ENCODE measurements at regions of chr10 and their contacts with region 1.

Region 1: GRCh38 chr10:18312374-18313139 is 172.3 kb downstream of the CACNB2 start:
- DNase-seq: no peak
- ATAC-seq: peak; percentile 91
- H3K4me3 ChIP-seq: no peak overlapping the region
- H3K27ac ChIP-seq: no peak overlapping the region
- H3K4me1 ChIP-seq: no peaks in the 10 kb centered on the region
- H3K27me3 ChIP-seq: no peaks in the 10 kb centered on the region
- CTCF ChIP-seq: peak; percentile 50 to 77 (median 52); a peak in 5 of 6 replicates
- EP300 ChIP-seq: no peak
- POLR2A ChIP-seq: no peak
- RAD21 ChIP-seq: peak; percentile 68

Region 2: DNA sequence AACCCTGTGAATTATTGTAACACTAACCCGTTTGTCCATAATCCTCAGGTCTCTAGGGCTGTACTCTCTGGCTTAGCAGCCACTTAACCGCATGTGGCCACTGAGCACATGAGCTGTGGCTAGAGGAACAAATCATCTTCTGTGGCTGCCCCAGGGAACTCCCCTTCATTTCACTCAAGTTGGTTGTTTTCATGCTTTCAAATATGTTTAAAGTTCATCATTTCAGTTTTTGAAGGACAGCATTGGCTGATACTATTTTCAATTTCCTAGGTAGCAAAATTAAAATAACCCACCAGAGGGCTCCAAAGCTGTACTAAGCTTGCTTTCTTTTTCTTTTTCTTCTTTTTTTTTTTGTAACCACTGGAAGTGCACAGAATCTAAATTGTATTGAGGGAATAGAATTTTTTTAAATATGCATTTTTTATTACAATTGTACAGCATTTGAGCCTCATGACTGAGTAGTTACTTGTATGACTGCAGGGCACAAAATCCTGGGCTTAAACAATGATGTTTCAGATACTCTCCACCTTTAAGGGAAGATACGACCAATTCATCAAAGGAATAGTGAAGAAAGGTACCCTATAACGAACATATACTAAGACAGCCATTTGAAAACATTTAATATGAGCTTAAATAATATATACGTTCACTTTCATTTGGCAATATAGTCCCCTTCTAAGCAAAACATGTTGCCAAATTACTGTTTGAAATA is 464.8 kb before region 1 on chr10:
- CTCF ChIA-PET with region 1: interaction called, 4 read pairs
- POLR2A ChIA-PET with region 1: no interaction called
- RAD21 ChIA-PET with region 1: interaction called, 7 read pairs
- SMC1A ChIA-PET with region 1: no interaction called
- in situ Hi-C with region 1: no loop called
- intact Hi-C with region 1: loop called (anchors 10 kb)
- DNase-seq: no peak
- ATAC-seq: peak; percentile 88
- H3K4me3 ChIP-seq: no peak overlapping the region
- H3K27ac ChIP-seq: no peak overlapping the region
- H3K4me1 ChIP-seq: no peaks in the 10 kb centered on the region
- H3K27me3 ChIP-seq: no peaks in the 10 kb centered on the region; a peak in 1 of 4 replicates
- CTCF ChIP-seq: peak; percentile 14 to 53 (median 38); a peak in 4 of 6 replicates
- EP300 ChIP-seq: no peak
- POLR2A ChIP-seq: no peak
- RAD21 ChIP-seq: peak; percentile 70

Region 3: DNA sequence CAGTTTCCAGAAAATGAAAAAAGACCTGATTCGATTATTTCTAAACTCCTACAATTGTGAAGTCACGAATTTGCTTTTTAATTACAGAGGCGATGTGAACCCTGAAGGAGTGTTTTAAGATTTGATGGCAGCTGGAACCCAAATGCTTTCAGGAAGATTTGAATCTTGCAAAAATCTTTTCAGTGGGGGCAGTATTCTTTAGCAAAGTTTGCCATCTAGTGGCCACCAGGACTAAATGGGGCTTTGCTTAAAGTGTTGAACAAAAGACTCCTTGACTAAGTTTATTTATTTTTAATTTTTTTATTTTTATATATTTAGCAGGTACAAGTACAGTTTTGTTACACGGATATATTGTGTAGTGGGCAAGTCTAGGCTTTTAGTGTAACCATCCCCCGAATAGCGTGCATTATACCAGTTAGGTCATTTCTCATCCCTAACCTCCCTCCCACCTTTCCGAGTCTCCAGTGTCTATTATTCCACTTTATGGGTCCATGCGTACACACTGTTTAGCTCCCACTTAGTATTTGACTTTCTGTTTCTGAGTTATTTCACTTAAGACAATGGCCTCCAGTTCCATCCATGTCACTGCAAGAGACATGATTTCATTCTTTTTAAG is 73.6 kb before region 1 on chr10:
- CTCF ChIA-PET with region 1: interaction called, 23 read pairs
- POLR2A ChIA-PET with region 1: interaction called, 3 read pairs
- RAD21 ChIA-PET with region 1: interaction called, 6 read pairs
- SMC1A ChIA-PET with region 1: interaction called, 19 read pairs
- in situ Hi-C with region 1: no loop called
- intact Hi-C with region 1: loop called (anchors 5 kb)
- DNase-seq: no peak
- ATAC-seq: peak; percentile 66
- H3K4me3 ChIP-seq: no peak overlapping the region
- H3K27ac ChIP-seq: no peak overlapping the region
- H3K4me1 ChIP-seq: no peaks in the 10 kb centered on the region
- H3K27me3 ChIP-seq: peaks cover 0 to 3% of the 10 kb centered on the region in 2 experiments; a peak in 2 of 4 replicates
- CTCF ChIP-seq: peak; percentile 51 to 68 (median 58); a peak in 5 of 6 replicates
- EP300 ChIP-seq: no peak
- POLR2A ChIP-seq: no peak
- RAD21 ChIP-seq: peak; percentile 77

Region 4: DNA sequence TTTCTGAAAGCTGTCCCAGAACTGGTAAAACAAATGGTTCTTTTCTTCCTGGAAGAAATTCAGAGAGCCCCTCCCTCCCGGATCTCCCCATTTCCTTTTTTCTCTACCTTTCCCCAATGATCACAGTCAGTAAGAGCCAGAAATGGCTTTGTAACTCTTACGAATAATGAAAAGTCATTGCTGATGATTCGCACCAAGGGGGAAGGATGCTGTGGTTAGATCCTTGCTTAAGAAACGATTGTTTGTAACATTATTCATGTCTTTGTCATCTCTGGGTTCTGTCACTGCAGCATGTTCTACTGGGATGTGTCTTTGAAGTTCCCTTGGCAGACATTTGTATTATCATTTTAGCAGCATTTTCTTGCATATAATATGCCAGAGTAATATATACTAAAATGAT is 33.4 kb before region 1 on chr10:
- CTCF ChIA-PET with region 1: interaction called, 15 read pairs
- POLR2A ChIA-PET with region 1: interaction called, 3 read pairs
- RAD21 ChIA-PET with region 1: no interaction called
- SMC1A ChIA-PET with region 1: interaction called, 3 read pairs
- in situ Hi-C with region 1: no loop called
- intact Hi-C with region 1: no loop called
- DNase-seq: no peak
- ATAC-seq: no peak
- H3K4me3 ChIP-seq: no peak overlapping the region
- H3K27ac ChIP-seq: no peak overlapping the region
- H3K4me1 ChIP-seq: no peaks in the 10 kb centered on the region
- H3K27me3 ChIP-seq: no peaks in the 10 kb centered on the region
- CTCF ChIP-seq: no peak
- EP300 ChIP-seq: no peak
- POLR2A ChIP-seq: no peak
- RAD21 ChIP-seq: no peak

Region 5: GRCh38 chr10:18325889-18326531 is 13.5 kb after region 1 on chr10:
- CTCF ChIA-PET with region 1: interaction called, 28 read pairs
- POLR2A ChIA-PET with region 1: interaction called, 4 read pairs
- RAD21 ChIA-PET with region 1: interaction called, 4 read pairs
- SMC1A ChIA-PET with region 1: interaction called, 9 read pairs
- in situ Hi-C with region 1: no loop called
- intact Hi-C with region 1: no loop called
- DNase-seq: no peak
- ATAC-seq: no peak
- H3K4me3 ChIP-seq: no peak overlapping the region
- H3K27ac ChIP-seq: no peak overlapping the region
- H3K4me1 ChIP-seq: no peaks in the 10 kb centered on the region
- H3K27me3 ChIP-seq: no peaks in the 10 kb centered on the region
- CTCF ChIP-seq: no peak
- EP300 ChIP-seq: no peak
- POLR2A ChIP-seq: no peak
- RAD21 ChIP-seq: no peak